Naive thymus-derived CD4-positive, alpha-beta T cell (primary cell): ENCODE measurements at regions of chr17 and their contacts with region 1.

Region 1: DNA sequence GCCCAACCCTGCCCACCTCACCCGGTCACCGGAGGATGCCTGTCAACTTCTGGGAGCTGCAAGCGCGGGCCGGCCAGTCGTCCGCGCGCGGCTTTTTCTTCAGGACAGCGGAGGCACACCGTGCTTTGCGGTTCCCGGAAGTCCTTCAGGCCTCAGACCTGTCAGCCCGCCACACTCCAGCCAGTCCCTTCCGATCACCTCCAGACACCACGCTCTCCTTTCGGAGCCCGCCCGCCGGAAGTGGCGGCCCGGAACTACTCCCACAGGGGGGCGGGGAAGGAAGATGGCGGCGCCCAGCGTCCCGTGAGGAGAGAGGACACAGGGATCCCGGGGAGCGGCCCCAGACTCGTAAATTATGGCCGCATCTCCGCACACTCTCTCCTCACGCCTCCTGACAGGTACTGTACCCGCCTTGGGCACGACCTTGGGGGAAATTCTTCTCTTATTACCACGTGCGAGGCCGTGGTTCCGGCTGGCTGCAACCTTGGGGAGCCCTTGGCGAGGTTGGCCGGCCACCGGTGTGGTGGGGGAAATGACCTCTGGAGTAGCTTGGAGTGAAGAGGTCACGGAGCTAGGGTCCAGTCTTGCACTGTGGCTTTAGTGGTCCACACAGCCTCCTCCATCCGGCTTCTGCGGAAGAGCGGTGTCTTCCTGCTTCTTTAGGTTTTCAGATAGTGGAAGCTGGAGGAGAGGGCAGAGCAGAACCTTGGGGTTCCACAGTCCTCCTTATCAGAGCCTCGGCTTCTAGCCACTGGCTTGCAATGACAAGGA is at the start of gene COX10:
- DNase-seq: peak; percentile 71 to 93 (median 78)
- ATAC-seq: peak; percentile 99
- H3K4me3 ChIP-seq: peak within 1 kb of the TSS; percentile 83
- H3K4me3 Mint-ChIP-seq: peak within 1 kb of the TSS; percentile 91 to 98 (median 94)
- H3K27ac ChIP-seq: peak within 1 kb of the TSS; percentile 89
- H3K27ac Mint-ChIP-seq: peak within 1 kb of the TSS; percentile 77 to 97 (median 92)
- H3K4me1 ChIP-seq: peaks cover 7 to 22% of the 10 kb centered on the region in 2 donors
- H3K4me1 Mint-ChIP-seq: peaks cover 29 to 59% (median 49%) of the 10 kb centered on the region in 7 donors
- H3K27me3 ChIP-seq: no peaks in the 10 kb centered on the region
- H3K27me3 Mint-ChIP-seq: no peaks in the 10 kb centered on the region
- total RNA-seq, gene COX10: 16.2 to 30.6 (median 19.3) TPM

Region 2: DNA sequence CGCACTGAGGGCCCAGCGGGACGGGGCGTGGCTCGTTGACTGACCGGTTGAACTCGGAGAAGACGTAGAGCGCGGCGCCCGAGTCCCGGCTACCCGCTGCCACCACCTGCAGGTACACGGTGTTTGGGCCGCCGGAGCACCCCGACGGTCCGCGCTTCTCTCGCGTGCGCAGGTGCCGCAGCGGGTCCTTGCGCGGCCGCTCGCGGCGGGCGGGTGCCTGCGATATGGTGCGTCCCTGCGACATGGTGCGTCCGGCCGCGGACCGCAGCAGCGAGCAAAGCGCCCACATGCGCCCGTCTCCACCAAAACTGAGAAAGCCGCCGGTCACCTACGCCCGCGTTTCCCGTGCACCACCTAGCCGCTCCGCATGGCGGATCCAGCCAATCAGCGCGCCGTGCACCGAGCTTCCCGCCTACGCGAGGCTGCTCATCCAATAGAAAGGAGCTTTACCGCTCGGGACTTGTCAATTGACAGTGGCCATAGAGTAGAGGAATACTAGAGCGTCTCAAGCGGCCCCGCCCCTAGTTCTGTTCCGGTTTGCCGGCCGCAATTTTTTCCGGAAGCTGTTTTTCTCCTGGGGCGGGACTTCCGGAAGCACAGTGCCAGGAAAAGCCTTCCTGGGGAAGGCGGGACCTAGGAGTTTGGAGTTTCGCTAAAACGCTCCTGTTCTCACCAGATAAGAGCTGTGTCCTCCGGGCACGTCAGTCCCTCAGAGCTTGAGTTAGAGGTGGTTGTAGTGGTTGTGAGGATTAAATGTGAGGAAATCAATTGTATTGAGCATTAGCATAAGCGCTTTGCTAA is 1051.6 kb before region 1 on chr17 and contains the start of gene ELAC2:
- CTCF ChIA-PET with region 1: no interaction called
- POLR2A ChIA-PET with region 1: no interaction called
- intact Hi-C with region 1: loop called in 1 of 2 experiments (anchors 2 kb)
- DNase-seq: peak; percentile 86 to 98 (median 95)
- ATAC-seq: peak; percentile 100
- H3K4me3 ChIP-seq: peak within 1 kb of the TSS; percentile 77
- H3K4me3 Mint-ChIP-seq: peak within 1 kb of the TSS; percentile 90 to 99 (median 96)
- H3K27ac ChIP-seq: peak within 1 kb of the TSS; percentile 78
- H3K27ac Mint-ChIP-seq: peak within 1 kb of the TSS; percentile 85 to 99 (median 97)
- H3K4me1 ChIP-seq: peaks cover 6 to 16% of the 10 kb centered on the region in 2 donors
- H3K4me1 Mint-ChIP-seq: peaks cover 18 to 48% (median 35%) of the 10 kb centered on the region in 7 donors
- H3K27me3 ChIP-seq: no peaks in the 10 kb centered on the region
- H3K27me3 Mint-ChIP-seq: no peaks in the 10 kb centered on the region
- total RNA-seq, gene ELAC2: 65.2 to 78.9 (median 75.3) TPM

Region 3: DNA sequence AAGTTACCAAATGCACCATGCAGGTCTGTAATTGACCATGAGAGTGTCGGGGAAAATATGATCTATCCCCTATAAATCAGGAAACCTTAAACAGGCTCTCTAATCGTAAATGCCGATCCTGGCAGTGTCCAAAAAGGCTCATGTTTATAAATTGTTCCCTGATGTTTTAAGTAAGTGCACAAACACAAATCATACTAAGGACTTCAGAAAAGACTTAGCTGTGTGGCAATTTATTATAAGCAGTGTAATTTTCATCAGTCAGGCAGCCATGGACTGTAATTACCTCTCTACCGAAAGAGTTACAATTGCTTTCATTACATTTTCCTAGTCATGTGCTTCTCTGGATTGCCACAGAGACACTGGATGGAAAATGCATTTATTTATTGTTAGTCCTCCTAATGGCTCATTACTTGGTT is 73.6 kb before region 1 on chr17:
- CTCF ChIA-PET with region 1: no interaction called
- POLR2A ChIA-PET with region 1: no interaction called
- intact Hi-C with region 1: no loop called
- DNase-seq: no peak
- ATAC-seq: no peak
- H3K4me3 ChIP-seq: no peak overlapping the region
- H3K4me3 Mint-ChIP-seq: no peak overlapping the region
- H3K27ac ChIP-seq: no peak overlapping the region
- H3K27ac Mint-ChIP-seq: no peak overlapping the region
- H3K4me1 ChIP-seq: no peaks in the 10 kb centered on the region
- H3K4me1 Mint-ChIP-seq: peaks cover 0 to 11% (median 0%) of the 10 kb centered on the region in 7 donors
- H3K27me3 ChIP-seq: no peaks in the 10 kb centered on the region
- H3K27me3 Mint-ChIP-seq: no peaks in the 10 kb centered on the region

Region 4: DNA sequence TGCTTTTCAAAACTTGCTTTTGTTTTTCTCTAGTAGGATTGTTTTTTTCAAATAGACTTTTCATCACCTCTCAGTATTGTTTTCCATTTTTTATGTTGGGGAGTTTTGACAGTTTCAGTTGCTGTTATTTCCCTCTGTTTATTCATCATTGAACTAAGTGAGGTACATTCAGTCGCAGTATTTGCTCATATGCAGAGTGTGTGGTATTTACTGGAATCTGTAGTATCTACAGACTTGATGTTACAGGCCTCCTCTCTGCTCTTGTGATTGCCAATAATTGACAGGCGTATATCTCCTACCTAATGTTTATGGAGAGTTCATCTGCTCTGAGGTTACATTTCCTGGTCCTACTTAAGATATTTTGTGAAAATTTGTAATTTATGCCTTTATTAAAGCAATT is 49.5 kb after region 1 on chr17:
- CTCF ChIA-PET with region 1: no interaction called
- POLR2A ChIA-PET with region 1: no interaction called
- intact Hi-C with region 1: loop called in 1 of 2 experiments (anchors 2 kb)
- DNase-seq: peak in 3 of 9 donors; percentile 11 to 48 (median 40)
- ATAC-seq: peak; percentile 79
- H3K4me3 ChIP-seq: no peak overlapping the region
- H3K4me3 Mint-ChIP-seq: peak overlapping the region in 5 of 10 donors; percentile 4 to 71 (median 8)
- H3K27ac ChIP-seq: no peak overlapping the region
- H3K27ac Mint-ChIP-seq: peak overlapping the region; percentile 65 to 96 (median 74)
- H3K4me1 ChIP-seq: peaks cover 0 to 7% of the 10 kb centered on the region in 2 donors
- H3K4me1 Mint-ChIP-seq: peaks cover 40 to 89% (median 75%) of the 10 kb centered on the region in 7 donors
- H3K27me3 ChIP-seq: no peaks in the 10 kb centered on the region
- H3K27me3 Mint-ChIP-seq: no peaks in the 10 kb centered on the region

Region 5: GRCh38 chr17:14135906-14136590 is 66.6 kb after region 1 on chr17:
- CTCF ChIA-PET with region 1: no interaction called
- POLR2A ChIA-PET with region 1: no interaction called
- intact Hi-C with region 1: no loop called
- DNase-seq: no peak
- ATAC-seq: no peak
- H3K4me3 ChIP-seq: no peak overlapping the region
- H3K4me3 Mint-ChIP-seq: no peak overlapping the region
- H3K27ac ChIP-seq: no peak overlapping the region
- H3K27ac Mint-ChIP-seq: no peak overlapping the region
- H3K4me1 ChIP-seq: no peaks in the 10 kb centered on the region
- H3K4me1 Mint-ChIP-seq: peaks cover 0 to 20% (median 14%) of the 10 kb centered on the region in 7 donors
- H3K27me3 ChIP-seq: no peaks in the 10 kb centered on the region
- H3K27me3 Mint-ChIP-seq: no peaks in the 10 kb centered on the region